IMR-90 (cell line): ENCODE measurements at regions of chr5 and their contacts with region 1.

Region 1: GRCh38 chr5:170183816-170184687 is 48.7 kb upstream of the C5orf58 start:
- DNase-seq: peak; percentile 37
- ATAC-seq: peak; percentile 94
- H3K4me3 ChIP-seq: no peak overlapping the region
- H3K27ac ChIP-seq: no peak overlapping the region
- H3K4me1 ChIP-seq: no peaks in the 10 kb centered on the region
- H3K27me3 ChIP-seq: no peaks in the 10 kb centered on the region
- CTCF ChIP-seq: peak; percentile 62
- POLR2A ChIP-seq: no peak
- RAD21 ChIP-seq: peak; percentile 74

Region 2: GRCh38 chr5:170100066-170100943 is 83.7 kb before region 1 on chr5:
- CTCF ChIA-PET with region 1: interaction called, 5 read pairs
- POLR2A ChIA-PET with region 1: no interaction called
- dilution Hi-C with region 1: no loop called
- in situ Hi-C with region 1: loop called (anchors 5 kb)
- intact Hi-C with region 1: loop called (anchors 1 kb)
- DNase-seq: peak; percentile 69
- ATAC-seq: peak; percentile 93
- H3K4me3 ChIP-seq: no peak overlapping the region
- H3K27ac ChIP-seq: no peak overlapping the region
- H3K4me1 ChIP-seq: no peaks in the 10 kb centered on the region
- H3K27me3 ChIP-seq: no peaks in the 10 kb centered on the region
- CTCF ChIP-seq: peak; percentile 71
- POLR2A ChIP-seq: no peak
- RAD21 ChIP-seq: peak; percentile 70

Region 3: DNA sequence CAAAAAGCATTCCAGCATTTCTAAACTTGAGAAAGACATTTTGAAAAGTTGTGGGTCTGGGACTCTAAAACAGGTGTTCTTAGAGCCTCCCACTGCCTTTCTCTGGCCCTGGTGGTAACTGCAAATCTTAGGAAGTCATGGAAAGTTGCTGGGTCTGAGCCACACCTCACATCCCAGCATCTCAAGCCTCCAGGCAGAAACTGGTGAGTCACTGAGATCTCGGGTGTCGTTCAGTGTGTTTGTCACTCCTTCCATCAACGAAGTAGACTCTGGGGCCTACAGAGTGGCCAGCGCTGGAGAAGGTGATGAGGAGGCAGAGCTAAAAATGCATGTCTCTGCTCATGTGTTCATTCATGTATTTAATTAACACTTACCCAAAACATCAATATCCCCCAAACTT is 10.8 kb before region 1 on chr5:
- CTCF ChIA-PET with region 1: interaction called, 10 read pairs
- POLR2A ChIA-PET with region 1: no interaction called
- dilution Hi-C with region 1: no loop called
- in situ Hi-C with region 1: no loop called
- intact Hi-C with region 1: no loop called
- DNase-seq: peak; percentile 23
- ATAC-seq: no peak
- H3K4me3 ChIP-seq: no peak overlapping the region
- H3K27ac ChIP-seq: no peak overlapping the region
- H3K4me1 ChIP-seq: no peaks in the 10 kb centered on the region
- H3K27me3 ChIP-seq: no peaks in the 10 kb centered on the region; the same call in 1 of the 2 replicates
- CTCF ChIP-seq: no peak
- POLR2A ChIP-seq: no peak
- RAD21 ChIP-seq: no peak